WTC11 (cell line): ENCODE measurements at regions of chr10 and their contacts with region 1.

Region 1: GRCh38 chr10:112434988-112435619 is 11.6 kb downstream of the ZDHHC6 start:
- DNase-seq: no peak
- ATAC-seq: no peak
- H3K4me3 Mint-ChIP-seq: no peak overlapping the region
- H3K27ac Mint-ChIP-seq: no peak overlapping the region
- H3K4me1 Mint-ChIP-seq: no peaks in the 10 kb centered on the region
- H3K27me3 Mint-ChIP-seq: no peaks in the 10 kb centered on the region
- CTCF ChIP-seq: no peak

Region 2: GRCh38 chr10:112191791-112192190 is 243.3 kb before region 1 on chr10:
- CTCF ChIA-PET with region 1: no interaction called
- POLR2A ChIA-PET with region 1: interaction called, 11 read pairs
- DNase-seq: no peak
- ATAC-seq: no peak
- H3K4me3 Mint-ChIP-seq: no peak overlapping the region
- H3K27ac Mint-ChIP-seq: no peak overlapping the region
- H3K4me1 Mint-ChIP-seq: no peaks in the 10 kb centered on the region
- H3K27me3 Mint-ChIP-seq: peaks cover 4% of the 10 kb centered on the region; the same call in 1 of the 2 replicates
- CTCF ChIP-seq: no peak

Region 3: GRCh38 chr10:112314822-112315474 is 120.2 kb before region 1 on chr10:
- CTCF ChIA-PET with region 1: interaction called, 13 read pairs
- POLR2A ChIA-PET with region 1: no interaction called
- DNase-seq: peak; percentile 84
- ATAC-seq: peak; percentile 94
- H3K4me3 Mint-ChIP-seq: no peak overlapping the region
- H3K27ac Mint-ChIP-seq: no peak overlapping the region
- H3K4me1 Mint-ChIP-seq: no peaks in the 10 kb centered on the region
- H3K27me3 Mint-ChIP-seq: no peaks in the 10 kb centered on the region
- CTCF ChIP-seq: peak; percentile 81

Region 4: DNA sequence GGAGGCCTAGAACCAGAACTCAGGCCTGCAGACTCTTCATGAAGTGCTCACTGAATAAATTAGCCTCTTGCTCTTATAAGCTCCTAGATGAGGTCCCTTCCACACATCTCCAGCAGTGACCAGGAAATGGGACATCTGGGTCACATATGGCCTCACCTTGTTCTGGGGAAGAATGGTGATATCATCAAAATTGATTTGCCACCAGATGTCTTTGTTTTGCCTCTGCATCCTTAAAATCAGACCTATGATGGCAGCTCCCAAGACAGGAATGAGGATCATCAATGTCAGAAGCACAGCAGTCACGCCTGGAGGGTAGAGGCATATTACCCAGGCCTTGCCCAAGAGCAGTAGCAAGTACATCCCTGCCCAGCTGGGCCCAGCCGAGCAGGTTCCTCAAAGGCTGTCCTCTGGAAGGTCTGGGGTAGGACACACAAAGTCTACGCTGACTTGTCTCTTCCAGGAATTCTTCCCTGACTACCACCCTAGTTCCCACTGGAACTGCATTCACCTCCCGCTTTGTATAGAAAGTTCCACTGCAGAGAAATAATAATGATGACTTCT is 94.4 kb before region 1 on chr10:
- CTCF ChIA-PET with region 1: no interaction called
- POLR2A ChIA-PET with region 1: no interaction called
- DNase-seq: no peak
- ATAC-seq: no peak
- H3K4me3 Mint-ChIP-seq: no peak overlapping the region
- H3K27ac Mint-ChIP-seq: no peak overlapping the region
- H3K4me1 Mint-ChIP-seq: no peaks in the 10 kb centered on the region
- H3K27me3 Mint-ChIP-seq: no peaks in the 10 kb centered on the region
- CTCF ChIP-seq: no peak